Calu3 (cell line): ENCODE measurements at regions of chr15 and their contacts with region 1.

Region 1: DNA sequence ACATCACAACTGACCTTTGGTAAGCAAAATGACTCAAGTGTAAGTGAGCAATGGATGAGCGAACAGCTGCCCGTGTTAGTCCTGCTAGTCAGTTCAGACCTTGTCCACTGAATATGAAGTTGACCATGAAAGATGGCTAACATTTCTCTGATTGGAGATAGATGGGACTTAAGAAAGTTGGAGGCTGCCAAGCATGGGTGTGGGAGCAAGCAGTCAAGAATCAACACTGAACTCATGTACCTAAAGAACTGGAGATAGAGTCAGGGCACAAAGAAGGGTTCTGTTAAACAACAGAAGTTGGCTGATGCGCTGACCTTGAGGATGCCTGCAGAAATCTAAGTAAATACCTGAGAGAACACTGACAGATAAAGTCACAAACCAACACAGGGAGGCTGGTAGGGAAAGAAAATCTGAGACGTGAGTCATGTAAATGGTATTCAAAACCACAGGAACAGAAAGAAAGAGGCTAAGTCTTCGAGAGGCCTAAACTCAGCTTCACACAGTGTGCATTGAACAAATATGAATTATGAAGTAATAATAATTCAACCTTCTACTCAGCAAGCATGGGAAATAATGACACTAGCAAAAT is 30.7 kb upstream of the ANPEP start:
- DNase-seq: peak; percentile 37
- H3K4me3 Mint-ChIP-seq: peak overlapping the region; percentile 8
- H3K27ac Mint-ChIP-seq: peak overlapping the region; percentile 77
- H3K4me1 Mint-ChIP-seq: peaks cover 46% of the 10 kb centered on the region
- H3K27me3 Mint-ChIP-seq: no peaks in the 10 kb centered on the region
- CTCF ChIP-seq: no peak

Region 2: GRCh38 chr15:89177633-89178306 is 667.6 kb before region 1 on chr15:
- CTCF ChIA-PET with region 1: no interaction called
- intact Hi-C with region 1: no loop called
- DNase-seq: peak; percentile 70
- H3K4me3 Mint-ChIP-seq: no peak overlapping the region
- H3K27ac Mint-ChIP-seq: no peak overlapping the region
- H3K4me1 Mint-ChIP-seq: no peaks in the 10 kb centered on the region
- H3K27me3 Mint-ChIP-seq: no peaks in the 10 kb centered on the region
- CTCF ChIP-seq: peak; percentile 76

Region 3: GRCh38 chr15:89526601-89527441 is 318.6 kb before region 1 on chr15:
- CTCF ChIA-PET with region 1: no interaction called
- intact Hi-C with region 1: no loop called
- DNase-seq: no peak
- H3K4me3 Mint-ChIP-seq: no peak overlapping the region
- H3K27ac Mint-ChIP-seq: no peak overlapping the region
- H3K4me1 Mint-ChIP-seq: no peaks in the 10 kb centered on the region
- H3K27me3 Mint-ChIP-seq: peaks cover 34% of the 10 kb centered on the region
- CTCF ChIP-seq: no peak

Region 4: GRCh38 chr15:89772932-89773583 is 72.3 kb before region 1 on chr15:
- CTCF ChIA-PET with region 1: no interaction called
- intact Hi-C with region 1: no loop called
- DNase-seq: no peak
- H3K4me3 Mint-ChIP-seq: no peak overlapping the region
- H3K27ac Mint-ChIP-seq: no peak overlapping the region
- H3K4me1 Mint-ChIP-seq: peaks cover 13% of the 10 kb centered on the region
- H3K27me3 Mint-ChIP-seq: no peaks in the 10 kb centered on the region
- CTCF ChIP-seq: peak; percentile 42

Region 5: GRCh38 chr15:89785061-89785773 is 60.2 kb before region 1 on chr15:
- CTCF ChIA-PET with region 1: interaction called, 3 read pairs
- intact Hi-C with region 1: loop called (anchors 5 kb)
- DNase-seq: peak; percentile 76
- H3K4me3 Mint-ChIP-seq: peak overlapping the region; percentile 26
- H3K27ac Mint-ChIP-seq: peak overlapping the region; percentile 88
- H3K4me1 Mint-ChIP-seq: peaks cover 51% of the 10 kb centered on the region
- H3K27me3 Mint-ChIP-seq: no peaks in the 10 kb centered on the region
- CTCF ChIP-seq: no peak

Region 6: DNA sequence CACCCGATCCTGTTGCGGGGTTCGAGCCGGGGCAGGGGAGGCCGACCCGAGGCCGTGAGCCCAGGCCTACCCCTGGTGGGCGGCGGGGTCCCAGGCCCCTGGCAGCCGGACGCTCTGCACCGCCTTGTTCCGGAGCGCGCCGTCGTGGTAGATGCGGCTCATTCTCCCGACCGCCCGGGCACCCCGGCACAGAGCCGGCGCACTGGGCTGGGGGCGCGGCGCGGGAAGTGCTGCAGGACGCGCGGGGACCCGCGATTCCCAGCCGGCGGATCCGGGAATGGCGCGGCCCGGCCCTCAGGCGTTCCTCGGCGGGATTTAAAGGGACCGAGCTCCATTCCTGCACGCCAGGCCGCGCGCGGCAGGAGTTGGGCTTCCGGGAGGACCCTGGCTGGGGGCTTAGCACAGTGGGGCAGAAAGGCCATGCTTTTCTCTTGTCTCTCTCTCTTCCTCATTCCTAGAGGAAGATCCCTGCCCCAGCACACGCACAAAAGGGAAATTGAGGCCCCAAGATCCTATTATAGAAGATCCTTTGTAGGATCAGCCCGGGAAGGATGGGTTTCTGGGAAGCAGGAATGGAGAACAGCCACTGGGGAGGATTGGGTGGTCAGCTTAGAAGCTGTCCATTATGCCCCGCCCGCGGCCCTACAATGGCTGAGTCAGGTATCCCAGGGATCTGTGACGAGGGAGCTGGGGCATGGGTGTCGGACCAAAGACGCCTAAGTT is 67.4 kb after region 1 on chr15 and contains the start of gene ARPIN:
- CTCF ChIA-PET with region 1: no interaction called
- intact Hi-C with region 1: no loop called
- DNase-seq: peak; percentile 72
- H3K4me3 Mint-ChIP-seq: peak within 1 kb of the TSS; percentile 86
- H3K27ac Mint-ChIP-seq: peak within 1 kb of the TSS; percentile 11
- H3K4me1 Mint-ChIP-seq: peaks cover 36% of the 10 kb centered on the region
- H3K27me3 Mint-ChIP-seq: no peaks in the 10 kb centered on the region
- CTCF ChIP-seq: no peak
- total RNA-seq, gene ARPIN: 19.1 and 20.1 TPM in 2 replicates